ENCODE measurements at regions of chr7 and their contacts with region 1.

Region 1: GRCh38 chr7:7566651-7567611 is at the start of gene MIOS:
- DNase-seq: peak; percentile 96
- H3K4me3 Mint-ChIP-seq: peak within 1 kb of the TSS; percentile 84
- H3K27ac Mint-ChIP-seq: peak within 1 kb of the TSS; percentile 79
- H3K4me1 Mint-ChIP-seq: peaks cover 23% of the 10 kb centered on the region
- H3K27me3 Mint-ChIP-seq: no peaks in the 10 kb centered on the region
- total RNA-seq, gene MIOS: 33.3 and 34.7 TPM in 2 replicates

Region 2: DNA sequence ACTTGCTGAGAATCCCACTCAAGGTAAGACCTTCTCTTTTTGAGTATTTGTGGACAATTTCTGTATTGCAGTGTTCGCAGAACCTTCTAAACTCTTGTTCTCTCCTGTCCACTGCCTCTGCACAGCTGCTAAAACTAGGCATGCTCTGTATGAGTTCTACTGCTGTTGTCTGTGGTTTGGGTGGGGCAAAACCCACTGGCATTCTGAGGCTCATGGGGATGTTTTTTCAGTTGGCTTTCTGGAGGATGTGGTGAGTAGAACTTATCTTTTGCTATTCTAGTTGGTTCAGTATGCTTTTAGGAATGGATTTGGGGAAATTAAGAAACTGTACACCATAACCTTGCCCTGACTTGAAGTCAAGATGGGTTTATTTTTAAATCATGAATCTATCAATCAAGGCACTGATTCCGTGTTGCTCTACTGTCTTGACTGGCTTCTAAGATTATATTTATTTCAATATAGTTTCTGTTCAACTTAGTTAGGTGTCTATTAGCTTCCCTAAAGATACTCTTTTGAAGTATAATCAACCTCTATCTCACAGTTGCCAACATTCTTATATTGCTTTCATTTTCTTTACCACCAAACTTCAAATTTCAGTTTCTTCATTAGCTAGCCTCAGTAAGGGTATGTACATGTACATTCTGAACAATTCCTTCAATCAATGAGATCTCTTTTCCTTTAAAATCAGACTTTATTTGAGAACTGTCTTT is 409.6 kb before region 1 on chr7:
- intact Hi-C with region 1: loop called (anchors 5 kb)
- DNase-seq: peak; percentile 90
- H3K4me3 Mint-ChIP-seq: peak overlapping the region; percentile 80
- H3K27ac Mint-ChIP-seq: peak overlapping the region; percentile 83
- H3K4me1 Mint-ChIP-seq: peaks cover 46% of the 10 kb centered on the region
- H3K27me3 Mint-ChIP-seq: no peaks in the 10 kb centered on the region

Region 3: GRCh38 chr7:7512861-7513597 is 53.9 kb before region 1 on chr7:
- intact Hi-C with region 1: no loop called
- DNase-seq: no peak
- H3K4me3 Mint-ChIP-seq: no peak overlapping the region
- H3K27ac Mint-ChIP-seq: no peak overlapping the region
- H3K4me1 Mint-ChIP-seq: no peaks in the 10 kb centered on the region
- H3K27me3 Mint-ChIP-seq: peaks cover 6% of the 10 kb centered on the region

Region 4: GRCh38 chr7:8149222-8149621 is 582.3 kb after region 1 on chr7:
- intact Hi-C with region 1: no loop called
- DNase-seq: no peak
- H3K4me3 Mint-ChIP-seq: no peak overlapping the region
- H3K27ac Mint-ChIP-seq: no peak overlapping the region
- H3K4me1 Mint-ChIP-seq: peaks cover 16% of the 10 kb centered on the region
- H3K27me3 Mint-ChIP-seq: no peaks in the 10 kb centered on the region